Heart left ventricle (tissue), 16 donors: ENCODE measurements at regions of chr5 and their contacts with region 1.

Region 1: DNA sequence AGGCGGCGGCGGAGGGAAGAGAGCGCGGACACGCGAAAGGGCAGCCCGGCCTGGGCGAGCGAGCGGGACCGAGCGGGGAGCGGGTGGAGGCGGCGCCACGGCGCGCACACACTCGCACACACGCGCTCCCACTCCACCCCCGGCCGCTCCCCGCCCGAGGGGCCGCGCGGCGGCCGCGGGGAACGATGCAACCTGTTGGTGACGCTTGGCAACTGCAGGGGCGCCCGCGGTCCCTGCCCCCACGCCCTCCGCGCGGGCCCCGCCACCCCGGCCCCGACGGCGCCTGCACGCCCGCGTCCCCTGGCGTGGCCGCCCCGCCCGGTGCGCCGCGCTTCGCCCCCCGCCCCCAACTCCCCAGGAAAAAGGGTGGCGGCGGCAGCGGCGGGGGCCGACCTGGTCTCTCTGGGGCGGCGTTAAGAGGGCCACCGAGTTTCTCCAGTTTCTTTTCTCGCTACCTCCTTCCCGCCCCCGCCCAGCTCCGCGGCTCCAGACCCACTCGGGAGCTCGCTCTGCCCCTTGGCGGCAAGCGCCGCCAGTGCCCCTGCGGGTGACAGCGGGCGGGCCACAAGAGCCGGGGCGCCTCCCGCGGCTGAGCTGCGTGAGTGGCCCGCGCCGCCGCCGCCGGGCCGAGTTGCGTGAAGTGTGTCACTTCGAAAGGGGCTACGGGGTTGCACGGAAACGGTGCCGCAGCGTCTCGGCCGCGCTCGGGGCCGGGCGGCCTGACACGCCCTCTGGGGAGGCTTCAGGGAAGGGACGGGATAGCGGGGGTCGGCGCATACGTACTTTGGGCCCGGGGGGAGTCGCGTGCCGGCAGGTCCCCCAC is at the start of gene NR3C1:
- DNase-seq: peak; percentile 90 to 96 (median 92)
- ATAC-seq: peak; percentile 61 to 90 (median 77)
- H3K4me3 ChIP-seq: peak within 1 kb of the TSS; percentile 64 to 95 (median 88)
- H3K27ac ChIP-seq: peak within 1 kb of the TSS; percentile 95 to 100 (median 99)
- H3K4me1 ChIP-seq: peaks cover 0 to 38% (median 19%) of the 10 kb centered on the region in 12 donors
- H3K27me3 ChIP-seq: no peaks in the 10 kb centered on the region
- CTCF ChIP-seq: peak; percentile 38 to 86 (median 65)
- POLR2A ChIP-seq: peak in 1 of 2 donors; percentile 58
- total RNA-seq, gene NR3C1: 29.6 to 73.7 (median 50.6) TPM

Region 2: GRCh38 chr5:142922223-142922952 is 481.4 kb before region 1 on chr5:
- intact Hi-C with region 1: loop called in 9 of 10 experiments (anchors 5 to 10 kb)
- DNase-seq: no peak
- ATAC-seq: peak in 2 of 4 donors; percentile 44 to 53
- H3K4me3 ChIP-seq: no peak overlapping the region
- H3K27ac ChIP-seq: peak overlapping the region in 8 of 12 donors; percentile 21 to 63 (median 44)
- H3K4me1 ChIP-seq: peaks cover 4 to 57% (median 43%) of the 10 kb centered on the region in 12 donors
- H3K27me3 ChIP-seq: no peaks in the 10 kb centered on the region
- CTCF ChIP-seq: peak; percentile 27 to 72 (median 52)
- POLR2A ChIP-seq: no peak

Region 3: GRCh38 chr5:143016777-143017516 is 386.9 kb before region 1 on chr5:
- intact Hi-C with region 1: loop called in 3 of 10 experiments (anchors 5 kb)
- DNase-seq: peak in 1 of 5 donors; percentile 42
- ATAC-seq: peak in 1 of 4 donors; percentile 31
- H3K4me3 ChIP-seq: no peak overlapping the region
- H3K27ac ChIP-seq: no peak overlapping the region
- H3K4me1 ChIP-seq: peaks cover 0 to 17% (median 6%) of the 10 kb centered on the region in 12 donors
- H3K27me3 ChIP-seq: no peaks in the 10 kb centered on the region
- CTCF ChIP-seq: peak; percentile 15 to 62 (median 34)
- POLR2A ChIP-seq: no peak

Region 4: GRCh38 chr5:143030349-143030748 is 373.5 kb before region 1 on chr5:
- intact Hi-C with region 1: no loop called
- DNase-seq: no peak
- ATAC-seq: no peak
- H3K4me3 ChIP-seq: no peak overlapping the region
- H3K27ac ChIP-seq: no peak overlapping the region
- H3K4me1 ChIP-seq: peaks cover 0 to 19% (median 5%) of the 10 kb centered on the region in 12 donors
- H3K27me3 ChIP-seq: no peaks in the 10 kb centered on the region
- CTCF ChIP-seq: no peak
- POLR2A ChIP-seq: no peak

Region 5: DNA sequence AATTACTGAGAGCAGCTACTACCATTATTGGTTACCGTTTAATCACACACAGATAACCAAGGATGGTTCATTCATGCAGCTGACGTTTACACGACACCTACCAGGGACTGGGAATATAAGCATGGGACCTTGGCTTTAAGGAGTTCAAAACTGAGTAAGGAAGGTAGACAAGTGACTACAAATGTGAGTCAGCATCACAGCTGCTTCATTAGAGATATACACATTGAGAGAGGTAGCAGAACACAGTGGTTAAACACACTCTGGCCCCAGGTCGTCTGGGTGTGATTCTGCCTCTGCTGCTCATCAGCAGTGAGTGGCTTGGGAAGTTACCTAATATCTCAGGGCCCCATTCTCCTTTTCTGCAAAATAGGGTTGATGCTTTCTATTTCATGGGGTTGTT is 268.9 kb before region 1 on chr5:
- intact Hi-C with region 1: loop called in 3 of 10 experiments (anchors 10 kb)
- DNase-seq: no peak
- ATAC-seq: no peak
- H3K4me3 ChIP-seq: no peak overlapping the region
- H3K27ac ChIP-seq: peak overlapping the region in 6 of 12 donors; percentile 7 to 52 (median 30)
- H3K4me1 ChIP-seq: peaks cover 4 to 77% (median 46%) of the 10 kb centered on the region in 12 donors
- H3K27me3 ChIP-seq: no peaks in the 10 kb centered on the region
- CTCF ChIP-seq: no peak
- POLR2A ChIP-seq: no peak

Region 6: GRCh38 chr5:143244000-143244736 is 159.6 kb before region 1 on chr5:
- intact Hi-C with region 1: no loop called
- DNase-seq: peak; percentile 50 to 67 (median 56)
- ATAC-seq: peak; percentile 81 to 87 (median 86)
- H3K4me3 ChIP-seq: peak overlapping the region in 6 of 12 donors; percentile 5 to 35 (median 18)
- H3K27ac ChIP-seq: peak overlapping the region in 11 of 12 donors; percentile 39 to 85 (median 68)
- H3K4me1 ChIP-seq: peaks cover 0 to 18% (median 7%) of the 10 kb centered on the region in 12 donors
- H3K27me3 ChIP-seq: no peaks in the 10 kb centered on the region
- CTCF ChIP-seq: no peak
- POLR2A ChIP-seq: no peak

Region 7: GRCh38 chr5:143271431-143271830 is 132.4 kb before region 1 on chr5:
- intact Hi-C with region 1: no loop called
- DNase-seq: no peak
- ATAC-seq: no peak
- H3K4me3 ChIP-seq: no peak overlapping the region
- H3K27ac ChIP-seq: no peak overlapping the region
- H3K4me1 ChIP-seq: peaks cover 0 to 4% (median 0%) of the 10 kb centered on the region in 12 donors
- H3K27me3 ChIP-seq: no peaks in the 10 kb centered on the region
- CTCF ChIP-seq: no peak
- POLR2A ChIP-seq: no peak

Region 8: GRCh38 chr5:143314659-143315058 is 89.1 kb before region 1 on chr5:
- intact Hi-C with region 1: loop called in 2 of 10 experiments (anchors 5 to 10 kb)
- DNase-seq: no peak
- ATAC-seq: peak in 3 of 4 donors; percentile 26 to 78 (median 70)
- H3K4me3 ChIP-seq: no peak overlapping the region
- H3K27ac ChIP-seq: peak overlapping the region in 1 of 12 donors; percentile 12
- H3K4me1 ChIP-seq: peaks cover 8 to 82% (median 62%) of the 10 kb centered on the region in 12 donors
- H3K27me3 ChIP-seq: no peaks in the 10 kb centered on the region
- CTCF ChIP-seq: no peak
- POLR2A ChIP-seq: no peak

Region 9: GRCh38 chr5:143564417-143564816 is 160.6 kb after region 1 on chr5:
- intact Hi-C with region 1: no loop called
- DNase-seq: no peak
- ATAC-seq: no peak
- H3K4me3 ChIP-seq: no peak overlapping the region
- H3K27ac ChIP-seq: no peak overlapping the region
- H3K4me1 ChIP-seq: peaks cover 0 to 30% (median 2%) of the 10 kb centered on the region in 12 donors
- H3K27me3 ChIP-seq: no peaks in the 10 kb centered on the region
- CTCF ChIP-seq: no peak
- POLR2A ChIP-seq: no peak

Region 10: DNA sequence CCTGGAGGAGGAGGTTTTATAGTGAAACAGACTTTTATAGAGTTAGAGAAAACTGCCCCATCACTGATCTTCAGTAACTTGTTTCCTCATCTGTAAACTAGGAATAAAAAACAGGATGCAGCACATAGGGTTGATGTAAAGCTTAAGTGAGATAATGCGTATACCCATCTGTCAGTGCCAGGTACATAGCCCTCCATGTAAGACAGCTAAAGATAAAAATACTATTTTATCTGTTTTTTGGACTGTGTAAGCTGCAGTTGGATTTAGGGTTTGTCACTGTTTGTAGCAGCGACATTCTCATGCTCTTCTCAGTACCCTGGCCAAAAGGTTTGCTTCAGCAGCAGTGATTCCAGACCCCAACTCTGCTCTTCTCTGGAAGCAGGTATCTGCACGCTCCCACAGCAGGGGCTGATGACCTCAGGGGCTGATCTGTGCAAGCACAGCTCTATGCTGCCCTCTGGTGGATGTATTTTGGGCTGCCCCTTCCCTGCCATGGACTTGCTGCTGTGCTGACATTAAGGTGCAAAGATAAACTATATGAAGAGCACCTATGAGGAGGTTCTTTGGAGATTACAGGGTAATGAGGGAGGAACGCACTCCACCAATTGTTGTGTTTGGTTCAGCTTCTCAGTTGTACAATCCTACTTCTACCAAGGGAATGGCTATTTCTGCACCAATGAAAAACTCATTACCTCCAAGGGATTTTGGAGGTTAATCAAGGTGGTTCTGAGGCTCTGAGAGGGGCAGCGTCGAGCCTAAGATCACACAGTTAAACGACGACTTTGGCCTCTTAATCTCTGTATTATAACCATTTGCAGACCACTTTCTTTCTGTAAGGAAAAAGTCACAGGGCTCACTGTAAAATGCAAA is 421.3 kb after region 1 on chr5:
- intact Hi-C with region 1: loop called in 9 of 10 experiments (anchors 1 to 5 kb)
- DNase-seq: peak; percentile 77 to 85 (median 84)
- ATAC-seq: peak; percentile 65 to 98 (median 96)
- H3K4me3 ChIP-seq: no peak overlapping the region
- H3K27ac ChIP-seq: no peak overlapping the region
- H3K4me1 ChIP-seq: peaks cover 0 to 12% (median 3%) of the 10 kb centered on the region in 12 donors
- H3K27me3 ChIP-seq: no peaks in the 10 kb centered on the region
- CTCF ChIP-seq: peak; percentile 91 to 99 (median 96)
- POLR2A ChIP-seq: no peak